ENCODE measurements at regions of chrX and their contacts with region 1.

Region 1: GRCh38 chrX:49172280-49172780 is 632 bp downstream of the PLP2 start:
- DNase-seq: peak; percentile 51 to 77 (median 54)
- ATAC-seq: peak; percentile 43
- H3K4me3 ChIP-seq: peak overlapping the region; percentile 57
- H3K27ac ChIP-seq: peak overlapping the region; percentile 76
- H3K4me1 ChIP-seq: peaks cover 45 to 56% of the 10 kb centered on the region in 2 experiments
- H3K27me3 ChIP-seq: no peaks in the 10 kb centered on the region
- CTCF ChIP-seq: no peak
- EP300 ChIP-seq: no peak
- POLR2A ChIP-seq: no peak
- RAD21 ChIP-seq: no peak

Region 2: GRCh38 chrX:48580664-48581063 is 591.7 kb before region 1 on chrX:
- CTCF ChIA-PET with region 1: no interaction called
- POLR2A ChIA-PET with region 1: no interaction called
- in situ Hi-C with region 1: no loop called
- intact Hi-C with region 1: no loop called
- DNase-seq: no peak
- ATAC-seq: no peak
- H3K4me3 ChIP-seq: no peak overlapping the region
- H3K27ac ChIP-seq: no peak overlapping the region
- H3K4me1 ChIP-seq: peaks cover 8 to 14% of the 10 kb centered on the region in 2 experiments; a peak in 4 of 5 replicates
- H3K27me3 ChIP-seq: no peaks in the 10 kb centered on the region
- CTCF ChIP-seq: no peak
- EP300 ChIP-seq: no peak
- POLR2A ChIP-seq: no peak
- RAD21 ChIP-seq: no peak

Region 3: DNA sequence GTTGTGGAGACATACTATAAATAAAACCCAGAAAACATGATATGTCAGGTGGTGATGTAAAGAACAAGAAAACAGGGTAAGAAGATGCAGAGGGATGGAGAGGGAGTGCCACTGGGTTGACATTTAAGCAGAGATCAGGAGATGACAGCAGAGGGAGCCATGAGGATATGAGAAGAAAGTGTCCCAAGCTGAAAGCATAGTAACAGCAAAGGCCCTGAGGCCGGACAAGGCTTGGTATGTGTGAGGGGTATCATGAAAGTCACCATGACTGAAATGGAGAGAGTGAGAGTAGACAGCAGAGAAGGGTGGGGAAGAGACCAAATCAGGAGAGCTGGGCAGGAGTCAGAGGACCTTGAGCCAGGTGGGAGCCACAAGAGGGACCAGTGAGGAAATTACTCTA is 52.2 kb before region 1 on chrX:
- CTCF ChIA-PET with region 1: no interaction called
- POLR2A ChIA-PET with region 1: interaction called, 3 read pairs
- in situ Hi-C with region 1: no loop called
- intact Hi-C with region 1: loop called (anchors 2 kb)
- DNase-seq: peak in 1 of 4 experiments; percentile 27
- ATAC-seq: no peak
- H3K4me3 ChIP-seq: no peak overlapping the region
- H3K27ac ChIP-seq: no peak overlapping the region
- H3K4me1 ChIP-seq: peaks cover 0 to 17% of the 10 kb centered on the region in 2 experiments; a peak in 4 of 5 replicates
- H3K27me3 ChIP-seq: no peaks in the 10 kb centered on the region
- CTCF ChIP-seq: peak; percentile 8 to 37 (median 17); a peak in 2 of 6 replicates
- EP300 ChIP-seq: no peak
- POLR2A ChIP-seq: no peak
- RAD21 ChIP-seq: peak; percentile 30 to 48

Measured in K562 (cell line).